GM23248 (cell line): ENCODE measurements at regions of chr4 and their contacts with region 1.

Region 1: GRCh38 chr4:80365928-80366327 is 30.4 kb downstream of the CFAP299 start:
- DNase-seq: peak; percentile 83
- H3K4me3 ChIP-seq: no peak overlapping the region
- H3K27ac ChIP-seq: no peak overlapping the region
- H3K4me1 ChIP-seq: peaks cover 7% of the 10 kb centered on the region; the same call in 1 of the 2 replicates
- H3K27me3 ChIP-seq: no peaks in the 10 kb centered on the region

Region 2: GRCh38 chr4:79476196-79476595 is 889.7 kb before region 1 on chr4:
- in situ Hi-C with region 1: no loop called
- DNase-seq: peak; percentile 4
- H3K4me3 ChIP-seq: no peak overlapping the region
- H3K27ac ChIP-seq: no peak overlapping the region
- H3K4me1 ChIP-seq: no peaks in the 10 kb centered on the region
- H3K27me3 ChIP-seq: no peaks in the 10 kb centered on the region

Region 3: GRCh38 chr4:81040012-81040659 is 674.2 kb after region 1 on chr4:
- in situ Hi-C with region 1: loop called (anchors 10 kb)
- DNase-seq: peak; percentile 68
- H3K4me3 ChIP-seq: no peak overlapping the region
- H3K27ac ChIP-seq: no peak overlapping the region
- H3K4me1 ChIP-seq: peaks cover 5% of the 10 kb centered on the region; the same call in 1 of the 2 replicates
- H3K27me3 ChIP-seq: peaks cover 5% of the 10 kb centered on the region; the same call in 1 of the 2 replicates

Region 4: GRCh38 chr4:81351654-81352445 is 985.9 kb after region 1 on chr4:
- in situ Hi-C with region 1: loop called (anchors 25 kb)
- DNase-seq: peak; percentile 73
- H3K4me3 ChIP-seq: peak overlapping the region; percentile 56
- H3K27ac ChIP-seq: no peak overlapping the region
- H3K4me1 ChIP-seq: peaks cover 25% of the 10 kb centered on the region
- H3K27me3 ChIP-seq: no peaks in the 10 kb centered on the region